Thyroid gland (tissue), 4 donors: ENCODE measurements at regions of chr6 and their contacts with region 1.

Region 1: DNA sequence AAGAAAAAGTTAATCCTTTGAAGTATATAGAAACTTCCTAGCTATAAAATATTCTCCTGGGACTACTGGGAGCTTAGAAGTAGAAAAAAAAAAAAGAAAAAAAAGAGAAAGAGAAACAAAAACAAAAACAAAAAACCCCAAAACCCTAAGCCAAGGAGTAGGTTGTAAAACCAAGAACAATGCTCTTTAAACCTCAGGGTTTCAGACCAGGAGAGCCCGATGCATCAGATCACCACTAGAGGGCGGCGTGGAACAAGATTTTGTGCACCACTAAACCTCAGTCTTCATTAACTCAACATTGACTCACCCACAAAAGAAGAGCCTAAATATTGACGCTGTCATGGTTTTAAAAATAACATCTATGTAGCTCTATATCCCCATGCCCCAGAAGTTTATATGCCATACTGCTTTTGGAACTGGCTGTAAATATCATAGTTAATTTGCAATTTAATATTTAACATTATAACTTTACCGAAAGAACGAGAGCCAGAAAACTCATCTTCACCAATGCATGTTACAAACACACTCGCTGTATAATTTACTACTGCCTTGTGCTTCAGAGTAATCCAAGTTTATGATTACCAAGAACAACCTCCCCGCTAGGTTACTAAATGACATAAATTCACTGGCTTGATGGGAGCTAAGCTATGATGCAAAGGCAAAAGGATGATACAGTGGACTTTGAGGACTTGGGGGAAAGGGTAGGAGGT is 19.2 kb downstream of the MCUR1 start:
- DNase-seq: peak; percentile 84 to 89
- H3K4me3 ChIP-seq: no peak overlapping the region
- H3K27ac ChIP-seq: no peak overlapping the region
- H3K4me1 ChIP-seq: no peaks in the 10 kb centered on the region
- H3K27me3 ChIP-seq: no peaks in the 10 kb centered on the region
- CTCF ChIP-seq: peak; percentile 85 to 97 (median 89)
- POLR2A ChIP-seq: no peak

Region 2: GRCh38 chr6:13742961-13743735 is 52.0 kb before region 1 on chr6:
- intact Hi-C with region 1: no loop called
- DNase-seq: peak in 1 of 2 donors; percentile 5
- H3K4me3 ChIP-seq: no peak overlapping the region
- H3K27ac ChIP-seq: no peak overlapping the region
- H3K4me1 ChIP-seq: no peaks in the 10 kb centered on the region
- H3K27me3 ChIP-seq: no peaks in the 10 kb centered on the region
- CTCF ChIP-seq: no peak
- POLR2A ChIP-seq: no peak

Region 3: DNA sequence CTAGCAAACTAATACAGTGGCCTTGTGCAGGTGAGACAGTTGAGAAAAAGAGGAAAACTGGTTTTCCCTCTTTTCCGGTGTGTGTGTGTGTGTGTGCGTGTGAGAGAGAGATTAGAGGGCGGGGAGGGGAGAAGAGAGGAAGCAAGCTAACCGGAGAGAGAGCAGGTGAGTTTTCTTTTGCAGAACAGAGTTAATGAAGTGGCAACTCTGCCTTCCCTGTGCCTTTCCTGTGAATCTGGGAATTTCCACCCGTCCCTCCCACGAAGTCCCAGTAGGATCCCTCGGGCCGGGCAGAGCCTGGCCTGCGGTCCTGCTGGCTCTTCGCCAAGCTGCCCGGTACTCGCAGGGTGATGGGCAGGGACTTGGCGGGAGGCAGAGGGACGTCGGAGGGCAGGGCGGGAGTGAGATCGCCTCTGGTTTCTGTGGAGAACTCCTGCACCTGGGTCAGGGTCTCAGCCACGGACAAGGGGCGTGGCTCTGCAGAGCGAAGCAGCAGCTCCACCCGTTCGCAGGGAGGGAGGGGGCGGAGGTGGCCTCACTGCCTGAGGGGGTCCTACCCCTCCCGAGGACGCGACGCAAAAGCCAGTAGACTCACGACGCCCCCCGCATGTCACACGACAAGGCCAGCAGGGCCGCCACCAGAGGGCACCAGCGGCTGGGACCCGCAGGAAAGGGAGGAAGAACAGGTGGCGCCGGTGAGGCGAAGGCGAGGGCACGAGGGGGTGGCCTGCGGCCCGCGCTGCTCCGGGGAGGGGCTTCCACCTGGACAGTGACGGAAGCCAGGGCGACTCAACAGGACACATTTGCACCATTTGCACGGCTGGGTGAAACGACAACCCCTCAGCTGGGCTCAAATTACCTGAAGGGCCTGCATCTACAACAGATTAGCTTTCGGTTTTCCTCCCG is 78.3 kb after region 1 on chr6:
- intact Hi-C with region 1: loop called (anchors 10 kb)
- DNase-seq: peak; percentile 85 to 86
- H3K4me3 ChIP-seq: peak overlapping the region; percentile 6 to 42 (median 6)
- H3K27ac ChIP-seq: peak overlapping the region; percentile 47 to 76 (median 72)
- H3K4me1 ChIP-seq: peaks cover 0 to 9% of the 10 kb centered on the region in 2 donors
- H3K27me3 ChIP-seq: no peaks in the 10 kb centered on the region
- CTCF ChIP-seq: peak; percentile 65 to 84 (median 70)
- POLR2A ChIP-seq: no peak

Region 4: DNA sequence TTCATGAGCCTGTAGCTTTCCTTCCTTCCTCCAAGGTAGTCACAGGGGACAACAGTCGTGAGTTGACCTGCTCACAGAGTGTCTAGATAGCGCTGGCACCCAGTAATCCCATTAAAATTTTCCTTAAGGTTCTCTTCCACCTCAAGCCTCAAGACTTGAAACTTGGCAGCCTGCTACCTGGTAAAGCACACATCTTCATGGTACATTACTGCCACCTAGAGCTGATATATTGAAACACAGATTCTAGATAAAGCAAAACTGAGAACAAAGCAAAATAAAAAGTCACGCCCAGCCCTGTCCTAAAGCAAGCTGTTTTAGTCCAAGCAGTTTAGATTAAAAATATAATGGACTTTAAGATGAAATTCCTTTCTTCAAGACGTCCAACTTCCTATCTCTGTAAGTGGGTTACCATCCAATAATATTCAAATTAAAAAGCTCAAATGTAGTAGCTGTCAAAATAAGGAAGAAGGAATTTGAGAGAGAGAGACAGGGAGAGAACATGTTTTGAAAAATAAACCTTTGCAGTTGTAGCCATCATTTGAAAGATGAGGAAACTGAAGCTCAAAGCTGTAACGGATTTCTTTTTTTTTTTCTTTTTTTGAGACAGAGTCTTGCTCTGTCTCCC is 271.7 kb after region 1 on chr6:
- intact Hi-C with region 1: loop called (anchors 10 kb)
- DNase-seq: peak; percentile 23 to 45
- H3K4me3 ChIP-seq: no peak overlapping the region
- H3K27ac ChIP-seq: no peak overlapping the region
- H3K4me1 ChIP-seq: no peaks in the 10 kb centered on the region
- H3K27me3 ChIP-seq: no peaks in the 10 kb centered on the region
- CTCF ChIP-seq: peak in 5 of 6 experiments; percentile 13 to 87 (median 69)
- POLR2A ChIP-seq: no peak